AG04450 (cell line): ENCODE measurements at regions of chr15 and their contacts with region 1.

Region 1: DNA sequence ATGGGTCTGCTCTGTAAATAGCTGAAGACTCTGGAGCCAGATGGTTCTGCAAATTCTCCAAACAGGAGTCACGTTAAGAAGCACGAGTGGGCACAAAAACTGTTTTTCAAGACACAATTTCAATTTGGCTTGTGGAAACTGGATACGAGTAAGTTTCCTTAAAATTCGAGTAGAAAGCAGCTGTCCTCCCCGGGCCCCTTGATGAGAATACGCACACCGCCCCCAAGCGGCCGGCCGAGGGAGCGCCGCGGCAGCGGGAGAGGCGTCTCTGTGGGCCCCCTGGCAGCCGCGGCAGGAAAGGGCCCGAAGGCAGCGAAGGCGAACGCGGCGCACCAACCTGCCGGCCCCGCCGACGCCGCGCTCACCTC is 778 bp upstream of the THBS1 start:
- DNase-seq: peak; percentile 95
- H3K4me3 ChIP-seq: peak overlapping the region; percentile 99
- H3K27ac ChIP-seq: peak overlapping the region; percentile 99
- H3K27me3 ChIP-seq: no peaks in the 10 kb centered on the region
- CTCF ChIP-seq: peak; percentile 92

Region 2: DNA sequence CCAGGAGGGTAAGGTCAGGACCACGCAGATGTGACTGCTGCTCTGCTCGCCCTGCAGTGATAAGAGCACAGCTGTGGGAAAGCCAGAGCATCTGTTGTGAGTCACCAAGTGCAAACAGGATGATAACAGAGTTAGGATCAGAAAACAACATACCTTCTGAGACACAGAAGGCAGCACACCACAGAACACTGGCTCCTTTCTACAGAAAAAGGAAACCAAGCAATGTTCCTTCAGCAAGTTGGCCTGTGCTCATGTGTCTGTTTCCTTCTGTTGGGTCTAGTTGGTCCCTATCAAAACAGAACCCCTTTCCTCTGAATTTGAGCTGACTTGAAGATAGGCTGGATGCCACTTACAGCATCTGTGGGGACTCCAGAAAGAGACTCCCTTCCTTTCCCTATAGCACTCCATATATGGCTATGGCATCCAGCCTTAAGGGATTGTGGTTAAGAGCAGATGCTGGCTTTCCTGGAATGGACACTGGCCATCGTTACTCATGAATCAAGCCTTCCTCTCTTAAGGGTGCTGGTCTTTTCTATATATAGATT is 440.0 kb before region 1 on chr15:
- CTCF ChIA-PET with region 1: interaction called, 4 read pairs
- POLR2A ChIA-PET with region 1: interaction called, 11 read pairs
- DNase-seq: peak; percentile 95
- H3K4me3 ChIP-seq: no peak overlapping the region; the same call in 1 of the 2 replicates
- H3K27ac ChIP-seq: peak overlapping the region; percentile 96
- H3K27me3 ChIP-seq: no peaks in the 10 kb centered on the region
- CTCF ChIP-seq: no peak

Region 3: DNA sequence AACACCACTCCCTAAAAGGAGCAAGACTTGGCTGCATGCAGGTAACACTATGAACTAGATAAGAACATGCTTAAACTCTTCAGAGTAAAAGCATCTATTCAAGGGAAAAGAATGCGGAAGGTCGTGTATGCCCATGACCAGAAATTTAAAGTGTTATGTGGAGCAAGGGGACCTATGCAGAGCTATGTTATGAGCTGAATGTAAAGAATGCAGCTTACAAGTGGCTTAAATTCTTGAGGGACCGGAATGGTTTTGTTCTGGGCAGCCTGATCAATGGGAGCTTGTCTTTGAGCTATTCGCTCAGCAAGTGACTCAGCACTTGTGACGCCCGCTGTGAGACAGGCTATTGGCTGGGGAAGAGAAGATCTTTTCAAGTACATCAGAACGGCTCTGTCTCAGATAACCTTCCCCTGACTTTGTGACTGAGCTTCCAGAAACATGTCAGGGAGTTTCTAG is 366.7 kb before region 1 on chr15:
- CTCF ChIA-PET with region 1: interaction called, 4 read pairs
- POLR2A ChIA-PET with region 1: interaction called, 16 read pairs
- DNase-seq: peak; percentile 95
- H3K4me3 ChIP-seq: no peak overlapping the region
- H3K27ac ChIP-seq: peak overlapping the region; percentile 89
- H3K27me3 ChIP-seq: no peaks in the 10 kb centered on the region
- CTCF ChIP-seq: no peak

Region 4: DNA sequence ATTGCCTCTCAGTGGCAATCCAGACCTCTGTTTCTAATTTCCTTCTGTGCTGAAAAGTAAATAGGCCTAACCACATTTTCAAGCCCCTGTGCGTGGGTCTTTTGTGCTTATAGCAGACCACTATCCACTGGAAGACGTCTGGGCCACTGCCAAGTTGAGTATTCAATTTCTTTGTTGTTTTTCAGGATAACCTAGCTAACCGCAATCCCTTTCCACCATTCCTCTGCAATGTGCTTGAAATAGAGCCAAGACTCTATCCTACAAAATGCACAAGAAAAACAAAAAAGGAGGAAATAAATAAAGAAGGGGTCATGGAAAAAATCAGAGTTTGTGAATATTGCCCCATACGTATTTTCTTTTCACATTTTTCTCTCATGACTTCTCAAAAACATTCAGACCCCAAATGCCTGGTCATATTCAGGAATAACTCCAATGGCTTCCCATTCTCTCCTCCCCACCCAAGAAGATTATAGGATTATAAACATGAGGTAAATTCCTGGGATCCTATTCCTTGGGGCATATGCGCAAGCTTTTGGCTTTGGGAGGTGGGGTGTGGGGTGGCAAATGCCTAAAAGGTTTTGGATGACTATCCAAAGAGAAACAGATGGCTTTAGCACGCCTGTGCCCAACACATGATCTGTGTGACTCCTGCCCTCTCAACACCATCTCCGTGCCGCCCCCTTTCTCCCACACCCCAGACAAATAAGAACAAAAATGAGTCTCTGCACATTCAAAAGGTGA is 217.1 kb before region 1 on chr15:
- CTCF ChIA-PET with region 1: interaction called, 4 read pairs
- POLR2A ChIA-PET with region 1: interaction called, 14 read pairs
- DNase-seq: peak; percentile 92
- H3K4me3 ChIP-seq: no peak overlapping the region
- H3K27ac ChIP-seq: peak overlapping the region; percentile 63
- H3K27me3 ChIP-seq: no peaks in the 10 kb centered on the region
- CTCF ChIP-seq: no peak

Region 5: DNA sequence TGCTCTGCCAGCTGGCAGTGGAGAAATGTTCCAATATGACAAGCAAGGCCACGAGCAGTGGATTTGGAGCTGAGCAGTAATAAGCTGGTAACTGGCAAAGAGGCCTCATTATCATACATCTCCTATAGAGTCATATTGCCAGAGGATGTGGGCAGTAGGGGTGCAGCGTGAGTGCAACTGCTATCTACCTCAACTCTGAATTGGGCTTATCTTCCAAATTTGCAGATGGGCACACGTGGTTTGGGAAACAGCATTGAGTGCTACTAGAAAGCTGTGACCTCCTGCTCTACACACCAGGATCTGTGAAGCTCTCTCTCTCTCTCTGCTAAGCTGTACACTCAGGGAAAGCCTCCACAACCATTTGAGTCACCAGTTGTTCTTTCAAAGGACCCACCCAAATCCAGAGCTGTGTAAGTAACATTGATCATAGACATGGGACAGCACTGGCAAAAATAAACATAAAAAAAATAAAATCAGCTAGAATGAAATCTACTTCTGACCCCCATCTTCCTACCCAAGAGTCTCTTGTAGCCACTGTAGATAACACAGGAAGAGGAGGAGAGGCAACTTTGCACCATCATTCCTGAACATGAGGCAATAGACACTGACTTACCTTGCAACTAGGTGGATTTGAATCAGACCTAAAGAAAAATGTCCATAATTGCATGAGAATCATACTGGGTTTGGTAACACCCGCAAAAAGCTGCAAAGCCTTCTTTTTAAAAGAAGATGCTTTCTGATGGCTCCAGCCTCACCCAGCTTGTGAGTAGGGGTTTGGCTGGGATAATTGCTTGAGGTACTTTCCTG is 82.1 kb before region 1 on chr15:
- CTCF ChIA-PET with region 1: interaction called, 3 read pairs
- POLR2A ChIA-PET with region 1: interaction called, 10 read pairs
- DNase-seq: no peak
- H3K4me3 ChIP-seq: no peak overlapping the region
- H3K27ac ChIP-seq: no peak overlapping the region
- H3K27me3 ChIP-seq: no peaks in the 10 kb centered on the region
- CTCF ChIP-seq: no peak

Region 6: GRCh38 chr15:39555885-39556284 is 24.2 kb before region 1 on chr15:
- CTCF ChIA-PET with region 1: no interaction called
- POLR2A ChIA-PET with region 1: interaction called, 16 read pairs
- DNase-seq: no peak
- H3K4me3 ChIP-seq: no peak overlapping the region
- H3K27ac ChIP-seq: peak overlapping the region; percentile 34
- H3K27me3 ChIP-seq: no peaks in the 10 kb centered on the region
- CTCF ChIP-seq: peak; percentile 19; the same call in 1 of the 2 replicates

Region 7: GRCh38 chr15:39756806-39757522 is 176.9 kb after region 1 on chr15:
- CTCF ChIA-PET with region 1: interaction called, 14 read pairs
- POLR2A ChIA-PET with region 1: interaction called, 4 read pairs
- DNase-seq: peak; percentile 43
- H3K4me3 ChIP-seq: no peak overlapping the region
- H3K27ac ChIP-seq: no peak overlapping the region
- H3K27me3 ChIP-seq: no peaks in the 10 kb centered on the region
- CTCF ChIP-seq: peak; percentile 77